B cell (primary cell): ENCODE measurements at regions of chr6 and their contacts with region 1.

Region 1: DNA sequence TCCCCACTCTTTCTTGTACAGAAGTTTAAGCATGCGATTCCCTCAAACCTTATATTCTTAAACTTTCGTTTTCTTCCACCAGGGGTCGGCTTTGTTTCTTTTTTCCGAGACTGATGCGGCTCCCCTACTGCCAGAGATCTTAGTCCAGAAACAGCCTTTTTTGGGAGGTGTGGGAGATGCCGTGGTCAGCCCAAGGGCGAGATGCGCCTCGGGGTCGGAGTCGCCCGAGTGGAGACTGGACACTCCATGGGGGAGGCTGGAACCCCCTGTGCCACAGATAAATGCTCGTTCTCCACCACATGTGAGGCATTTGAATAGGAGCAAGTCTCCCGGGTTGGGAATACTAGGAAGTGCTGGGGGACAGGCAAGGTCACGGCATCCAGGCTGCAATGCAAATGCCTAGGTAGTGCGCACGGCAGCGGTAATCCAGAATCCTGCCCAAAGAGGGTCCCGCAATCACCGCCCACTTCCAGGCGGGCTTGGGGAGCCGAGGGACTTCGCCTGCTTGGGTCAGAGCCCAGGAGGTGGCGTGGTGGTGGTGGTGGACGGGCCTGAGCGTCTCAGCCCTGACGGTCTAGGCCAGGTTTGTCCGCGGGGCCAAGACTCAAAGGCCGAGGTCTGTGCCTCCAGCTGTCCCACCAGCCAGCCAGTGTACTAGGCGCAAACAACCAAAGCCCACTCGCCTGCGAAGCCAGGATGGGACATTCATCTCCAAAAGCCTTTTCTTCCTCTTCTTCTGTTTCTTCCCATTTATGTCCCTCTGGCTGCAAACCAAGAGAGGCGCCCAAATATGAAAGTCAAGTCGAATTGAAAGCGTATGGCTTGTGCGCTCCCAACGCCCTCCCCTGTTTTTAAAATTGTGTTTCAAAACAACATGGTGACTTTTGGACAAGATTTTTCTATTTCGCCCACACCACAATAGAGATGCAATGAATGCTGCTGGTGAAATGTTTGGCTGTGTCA is 39.3 kb upstream of the OSTM1 start:
- DNase-seq: peak; percentile 72
- ATAC-seq: no peak
- H3K4me3 ChIP-seq: peak overlapping the region in 2 of 5 experiments; percentile 15 to 31
- H3K4me3 Mint-ChIP-seq: peak overlapping the region; percentile 85
- H3K27ac ChIP-seq: no peak overlapping the region
- H3K27ac Mint-ChIP-seq: no peak overlapping the region
- H3K4me1 ChIP-seq: peaks cover 45 to 51% of the 10 kb centered on the region in 2 donors
- H3K4me1 Mint-ChIP-seq: peaks cover 44% of the 10 kb centered on the region
- H3K27me3 ChIP-seq: peaks cover 0 to 72% (median 63%) of the 10 kb centered on the region in 4 experiments
- H3K27me3 Mint-ChIP-seq: peaks cover 71% of the 10 kb centered on the region
- CTCF ChIP-seq: peak; percentile 74

Region 2: DNA sequence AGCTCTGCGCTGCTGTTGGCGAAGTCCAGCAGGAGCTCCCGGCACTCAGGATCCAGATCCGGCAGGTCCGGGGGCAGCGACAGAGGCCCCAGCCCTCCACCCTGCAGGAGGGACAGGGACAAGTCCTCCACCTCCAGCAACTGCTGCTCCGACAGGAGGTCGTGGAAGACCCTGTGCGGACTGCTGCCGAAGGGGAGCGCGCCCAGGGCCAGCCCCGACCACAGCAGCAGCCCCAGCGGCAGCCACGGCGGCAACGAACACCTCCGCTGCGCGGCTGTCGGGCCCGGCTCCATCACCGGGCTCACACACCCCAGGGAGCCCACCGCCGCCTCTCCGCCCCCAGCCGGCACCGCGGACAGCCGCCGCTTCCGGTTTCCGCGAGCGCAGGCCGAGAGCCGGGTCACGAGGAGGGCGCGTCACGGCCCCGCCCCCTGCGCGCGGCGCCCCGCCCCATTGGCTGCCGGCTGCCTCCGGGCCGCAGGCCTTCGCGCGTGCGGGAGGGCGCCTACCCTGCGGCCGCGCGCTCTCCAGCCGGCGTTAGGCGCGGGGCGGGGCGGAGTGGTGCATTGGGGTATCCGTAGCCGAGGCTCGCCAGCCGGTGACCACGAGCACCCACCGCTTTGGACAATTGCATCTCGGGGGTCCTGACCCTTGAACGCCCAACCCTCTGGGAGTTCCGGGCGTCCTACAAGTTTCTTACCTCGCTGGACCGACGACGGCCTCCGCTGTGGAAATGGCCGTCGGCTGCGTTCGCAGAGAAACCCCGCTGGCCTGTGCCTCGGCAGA is 39.3 kb before region 1 on chr6 and contains the start of gene OSTM1:
- CTCF ChIA-PET with region 1: no interaction called
- POLR2A ChIA-PET with region 1: interaction called, 5 read pairs
- intact Hi-C with region 1: loop called (anchors 2 kb)
- DNase-seq: peak; percentile 95
- ATAC-seq: peak; percentile 96
- H3K4me3 ChIP-seq: peak within 1 kb of the TSS; percentile 75 to 96 (median 90)
- H3K4me3 Mint-ChIP-seq: peak within 1 kb of the TSS; percentile 89
- H3K27ac ChIP-seq: peak within 1 kb of the TSS; percentile 78 to 91
- H3K27ac Mint-ChIP-seq: peak within 1 kb of the TSS; percentile 93
- H3K4me1 ChIP-seq: peaks cover 15 to 18% of the 10 kb centered on the region in 2 donors
- H3K4me1 Mint-ChIP-seq: peaks cover 29% of the 10 kb centered on the region
- H3K27me3 ChIP-seq: no peaks in the 10 kb centered on the region
- H3K27me3 Mint-ChIP-seq: peaks cover 5% of the 10 kb centered on the region
- CTCF ChIP-seq: no peak
- total RNA-seq, gene OSTM1: 33.2 and 41.7 TPM in 2 replicates

Region 3: GRCh38 chr6:108157234-108157980 is 43.6 kb after region 1 on chr6:
- CTCF ChIA-PET with region 1: interaction called, 3 read pairs
- POLR2A ChIA-PET with region 1: no interaction called
- intact Hi-C with region 1: loop called (anchors 2 kb)
- DNase-seq: peak; percentile 60
- ATAC-seq: peak; percentile 28
- H3K4me3 ChIP-seq: peak overlapping the region in 3 of 5 experiments; percentile 29 to 47 (median 37)
- H3K4me3 Mint-ChIP-seq: peak overlapping the region; percentile 73
- H3K27ac ChIP-seq: no peak overlapping the region
- H3K27ac Mint-ChIP-seq: no peak overlapping the region
- H3K4me1 ChIP-seq: peaks cover 18 to 23% of the 10 kb centered on the region in 2 donors
- H3K4me1 Mint-ChIP-seq: peaks cover 16% of the 10 kb centered on the region
- H3K27me3 ChIP-seq: peaks cover 0 to 77% (median 70%) of the 10 kb centered on the region in 4 experiments
- H3K27me3 Mint-ChIP-seq: peaks cover 82% of the 10 kb centered on the region
- CTCF ChIP-seq: no peak

Region 4: GRCh38 chr6:108359901-108360882 is 246.4 kb after region 1 on chr6:
- CTCF ChIA-PET with region 1: interaction called, 12 read pairs
- POLR2A ChIA-PET with region 1: no interaction called
- intact Hi-C with region 1: loop called (anchors 10 kb)
- DNase-seq: peak; percentile 42
- ATAC-seq: peak; percentile 31
- H3K4me3 ChIP-seq: no peak overlapping the region
- H3K4me3 Mint-ChIP-seq: no peak overlapping the region
- H3K27ac ChIP-seq: no peak overlapping the region
- H3K27ac Mint-ChIP-seq: no peak overlapping the region
- H3K4me1 ChIP-seq: no peaks in the 10 kb centered on the region
- H3K4me1 Mint-ChIP-seq: peaks cover 11% of the 10 kb centered on the region
- H3K27me3 ChIP-seq: no peaks in the 10 kb centered on the region
- H3K27me3 Mint-ChIP-seq: no peaks in the 10 kb centered on the region
- CTCF ChIP-seq: peak; percentile 40

Region 5: DNA sequence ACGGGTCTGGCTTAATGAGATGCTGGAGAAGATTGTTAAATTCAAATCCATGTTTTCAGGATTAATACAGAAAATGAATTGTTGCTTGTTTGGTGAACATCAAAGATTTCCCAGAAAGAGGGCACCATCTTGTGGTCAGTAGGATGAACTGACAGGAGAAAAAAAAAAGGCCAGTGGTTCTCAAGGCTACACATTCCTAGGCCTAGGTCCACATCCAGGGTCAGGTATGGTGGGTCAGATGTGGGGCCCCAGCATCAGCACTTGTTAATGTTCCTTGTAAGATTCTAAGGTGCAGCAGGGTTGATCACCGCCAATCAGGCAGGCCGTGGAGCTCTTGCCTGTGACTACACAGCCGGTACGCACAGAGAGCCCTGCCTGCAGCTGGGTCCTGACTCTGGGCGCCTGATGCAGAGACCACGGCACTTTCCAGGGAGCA is 412.9 kb after region 1 on chr6:
- CTCF ChIA-PET with region 1: interaction called, 47 read pairs
- POLR2A ChIA-PET with region 1: no interaction called
- intact Hi-C with region 1: loop called (anchors 1 kb)
- DNase-seq: peak; percentile 63
- ATAC-seq: peak; percentile 49
- H3K4me3 ChIP-seq: no peak overlapping the region
- H3K4me3 Mint-ChIP-seq: no peak overlapping the region
- H3K27ac ChIP-seq: no peak overlapping the region
- H3K27ac Mint-ChIP-seq: no peak overlapping the region
- H3K4me1 ChIP-seq: no peaks in the 10 kb centered on the region
- H3K4me1 Mint-ChIP-seq: no peaks in the 10 kb centered on the region
- H3K27me3 ChIP-seq: no peaks in the 10 kb centered on the region
- H3K27me3 Mint-ChIP-seq: no peaks in the 10 kb centered on the region
- CTCF ChIP-seq: peak; percentile 86